Activated T-helper 2 cell treated with anti-CD3 and anti-CD28 coated beads, Interferon-gamma antibody, Interleukin-2, Interleukin-4, amounts not matched to agents 10 μg/mL and 5 μg/mL and 100 μg/mL, durations not matched to agents 14 hours and 24 hours and 36 hours (primary cell): ENCODE measurements at regions of chr17 and their contacts with region 1.

Region 1: DNA sequence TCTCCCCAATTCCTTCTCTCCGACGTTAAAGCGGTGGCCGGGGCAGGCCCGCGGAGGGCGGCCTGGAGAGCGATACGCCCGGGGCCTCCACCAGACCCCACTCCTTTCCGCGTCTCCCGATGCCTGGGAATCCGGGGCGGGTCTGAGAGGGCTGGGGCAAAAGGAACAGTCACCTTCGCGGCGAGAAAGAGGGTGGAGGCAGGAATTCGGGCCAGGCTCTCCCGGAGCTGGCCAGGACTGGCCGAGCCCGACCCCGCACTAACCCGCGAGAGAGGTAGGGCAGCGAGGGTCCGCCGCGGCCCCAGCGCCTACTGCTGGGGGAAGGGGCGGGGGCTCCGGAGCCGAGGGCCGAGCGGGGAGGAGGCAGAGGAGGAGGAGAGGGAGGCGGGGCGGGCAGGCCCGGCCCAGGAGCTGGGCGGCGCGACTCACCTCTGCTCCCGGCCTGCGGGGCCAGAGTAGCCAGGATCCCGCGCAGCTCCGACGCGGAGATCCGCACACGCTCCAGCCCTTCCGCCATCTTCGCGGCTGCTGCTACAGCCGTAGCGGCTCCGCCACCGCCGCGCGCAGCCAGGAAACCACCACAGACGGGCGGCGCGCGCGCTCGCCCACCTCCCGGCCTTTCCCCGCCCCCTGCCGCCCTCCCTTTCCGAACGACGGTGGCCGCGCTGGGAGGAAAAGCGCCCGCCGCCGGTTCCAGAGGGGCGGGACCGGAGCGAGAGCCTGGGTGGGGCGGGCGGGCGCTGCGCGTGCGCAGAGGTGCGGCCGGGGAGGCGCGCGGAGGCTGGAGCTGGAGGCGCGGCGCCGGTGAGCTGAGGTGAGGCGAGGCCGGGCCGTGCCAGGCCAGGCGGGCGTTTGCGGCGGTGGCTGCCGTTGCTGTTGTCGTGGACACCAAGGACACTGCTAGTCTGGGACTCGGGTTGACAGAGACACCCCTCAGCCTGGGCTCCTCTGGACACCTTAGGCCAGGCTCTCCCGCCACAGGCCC is at the starts of genes SMG6 and SRR:
- DNase-seq: peak; percentile 90
- H3K4me3 Mint-ChIP-seq: peak within 1 kb of the TSS; percentile 87
- H3K27ac Mint-ChIP-seq: peak within 1 kb of the TSS; percentile 70
- H3K4me1 Mint-ChIP-seq: peaks cover 25% of the 10 kb centered on the region
- H3K27me3 Mint-ChIP-seq: no peaks in the 10 kb centered on the region
- total RNA-seq, gene SMG6: 33.5 and 43.0 TPM in 2 replicates
- total RNA-seq, gene SRR: 17.3 and 18.4 TPM in 2 replicates

Region 2: GRCh38 chr17:2282297-2282873 is 21.1 kb before region 1 on chr17:
- intact Hi-C with region 1: no loop called
- DNase-seq: no peak
- H3K4me3 Mint-ChIP-seq: no peak overlapping the region
- H3K27ac Mint-ChIP-seq: peak overlapping the region; percentile 65
- H3K4me1 Mint-ChIP-seq: peaks cover 45% of the 10 kb centered on the region
- H3K27me3 Mint-ChIP-seq: no peaks in the 10 kb centered on the region

Region 3: DNA sequence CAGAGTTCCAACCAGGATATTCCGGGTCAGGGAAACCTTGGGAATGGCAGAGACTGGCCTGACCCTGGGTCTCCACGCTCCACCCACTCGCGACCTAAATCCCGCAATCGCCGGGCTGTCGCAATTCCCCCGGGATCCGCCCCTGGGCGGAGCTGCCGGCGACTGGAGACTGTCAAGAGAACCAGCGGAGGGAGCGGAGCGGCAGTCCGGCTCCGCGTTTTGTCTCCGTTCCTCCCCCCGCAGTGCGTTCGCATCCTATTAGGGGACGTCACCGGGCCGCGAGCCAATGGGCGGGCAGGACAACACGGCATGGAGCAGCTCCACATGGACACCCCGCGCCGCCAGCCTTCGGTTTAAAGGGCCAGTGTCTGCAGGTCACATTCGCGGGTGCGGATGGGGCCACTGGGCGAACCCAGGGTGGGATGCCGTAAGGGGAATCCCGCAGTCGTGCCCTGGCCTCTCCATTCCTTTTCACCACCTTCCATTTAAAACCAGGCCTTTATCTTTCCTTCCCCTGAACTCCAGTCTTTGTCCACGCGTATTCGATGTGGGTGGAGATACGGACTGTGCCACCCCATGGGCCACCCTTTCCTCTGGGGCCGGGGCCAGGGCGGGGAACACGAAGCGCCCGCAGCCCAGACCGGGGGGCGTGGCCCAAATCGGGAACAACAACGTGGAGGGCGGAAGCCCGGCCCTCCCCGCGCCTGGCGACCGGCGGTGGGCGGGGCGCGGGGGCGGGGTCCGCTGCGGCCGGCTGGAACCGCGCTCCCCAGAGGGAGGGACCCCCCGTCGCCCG is 98.1 kb after region 1 on chr17:
- intact Hi-C with region 1: loop called (anchors 2 kb)
- DNase-seq: peak; percentile 99
- H3K4me3 Mint-ChIP-seq: peak overlapping the region; percentile 89
- H3K27ac Mint-ChIP-seq: peak overlapping the region; percentile 97
- H3K4me1 Mint-ChIP-seq: peaks cover 44% of the 10 kb centered on the region
- H3K27me3 Mint-ChIP-seq: no peaks in the 10 kb centered on the region